Right ventricle myocardium superior (tissue), 1 donor: ENCODE measurements at regions of chr20 and their contacts with region 1.

Region 1: GRCh38 chr20:45095753-45096371 is 5.1 kb downstream of the KCNS1 start:
- DNase-seq: no peak
- ATAC-seq: peak; percentile 80

Region 2: DNA sequence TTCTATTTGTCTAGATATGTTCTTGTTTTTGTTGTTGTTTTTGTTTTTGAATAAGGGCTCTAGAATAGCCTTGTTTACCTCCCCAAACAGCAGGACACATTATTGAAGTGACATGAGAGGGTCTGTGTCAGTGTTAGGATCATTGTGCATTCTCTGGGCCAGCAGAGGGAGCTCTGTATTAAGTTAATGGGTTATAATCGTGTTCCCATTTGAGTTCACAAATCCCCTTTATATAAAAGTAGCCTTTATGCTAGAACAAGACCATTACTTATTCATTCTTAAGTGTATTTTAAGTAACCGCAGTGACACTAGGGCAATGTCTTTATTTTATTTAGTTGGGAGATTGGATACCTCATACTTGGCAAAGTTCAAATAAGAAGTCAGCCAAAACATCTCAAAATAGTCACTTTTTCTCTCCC is 84.7 kb before region 1 on chr20:
- intact Hi-C with region 1: loop called (anchors 5 kb)
- DNase-seq: no peak
- ATAC-seq: peak; percentile 77

Region 3: DNA sequence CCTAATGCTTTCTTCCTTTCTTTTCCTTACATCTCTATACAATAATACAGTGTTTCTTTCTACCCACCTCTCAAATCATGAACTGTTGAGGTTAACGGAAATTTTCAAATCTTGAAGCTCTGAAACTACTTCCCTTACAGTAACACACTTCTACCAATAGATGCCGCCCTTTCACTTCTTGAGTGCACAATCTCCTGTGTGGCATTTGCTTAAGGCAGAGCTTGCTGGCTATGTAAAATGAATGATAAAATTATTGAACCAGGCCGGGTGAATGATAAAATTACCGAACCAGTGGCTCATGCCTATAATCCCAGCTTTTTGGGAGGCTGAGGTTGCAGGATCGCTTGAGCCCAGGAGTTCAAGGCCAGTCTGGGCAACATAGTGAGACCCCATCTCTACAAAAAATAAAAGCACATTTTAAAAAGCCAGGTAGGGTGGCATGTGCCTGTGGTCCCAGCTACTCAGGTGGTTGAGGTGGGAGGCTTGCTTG is 51.7 kb before region 1 on chr20:
- intact Hi-C with region 1: loop called (anchors 5 kb)
- DNase-seq: no peak
- ATAC-seq: peak; percentile 75

Region 4: DNA sequence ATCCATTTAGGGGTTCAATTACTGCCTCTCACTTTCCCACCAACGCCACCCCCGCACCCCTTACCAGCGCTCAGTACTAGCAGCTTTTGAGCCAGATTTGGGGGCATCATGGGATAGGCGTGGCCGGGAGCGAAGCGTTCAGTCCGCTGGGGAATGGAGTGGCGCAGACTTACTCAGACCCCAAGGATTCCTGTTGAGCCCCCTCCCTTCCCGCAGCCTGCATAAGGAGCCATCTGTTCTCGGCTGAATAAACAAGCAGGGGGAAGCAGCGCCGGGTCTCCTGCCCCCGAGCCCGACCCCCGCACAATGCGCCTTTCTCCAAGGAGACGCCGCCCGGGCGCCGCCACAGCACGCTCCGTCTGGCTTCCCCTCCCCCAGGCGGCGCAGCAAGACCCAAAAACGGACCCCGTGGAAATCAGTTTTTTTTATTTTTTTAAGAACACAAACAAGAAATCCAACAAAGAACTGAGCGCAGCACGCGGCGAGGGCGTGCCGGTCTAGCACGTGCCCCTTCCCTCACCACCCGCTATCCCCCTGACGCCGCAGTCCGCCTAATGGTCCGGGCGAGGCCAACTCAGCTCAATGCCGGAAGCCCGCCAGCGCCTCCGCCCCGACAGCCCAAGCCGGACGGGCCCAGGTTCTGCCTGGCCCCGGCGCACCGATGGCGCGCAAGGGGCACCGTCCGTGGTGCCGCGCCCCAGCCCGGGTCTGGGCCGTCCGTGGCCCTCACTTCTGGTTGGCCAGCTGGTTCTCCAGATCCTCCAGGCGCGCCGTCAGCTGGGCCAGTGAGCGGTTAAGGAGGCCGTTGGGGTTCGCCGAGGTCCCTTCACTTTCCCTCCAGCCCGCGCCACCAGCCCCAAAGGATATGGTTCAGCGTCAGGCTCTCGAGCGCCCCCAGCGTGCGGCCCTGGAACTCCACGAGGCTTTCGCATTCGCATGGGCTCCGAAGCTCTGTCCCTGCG is 197.5 kb after region 1 on chr20:
- intact Hi-C with region 1: loop called (anchors 5 kb)
- DNase-seq: peak; percentile 90
- ATAC-seq: peak; percentile 91